ENCODE measurements at regions of chr16 and their contacts with region 1.

Region 1: GRCh38 chr16:48452977-48453760 is 68.0 kb upstream of the SIAH1 start:
- DNase-seq: no peak
- H3K4me3 Mint-ChIP-seq: no peak overlapping the region
- H3K27ac Mint-ChIP-seq: no peak overlapping the region
- H3K4me1 Mint-ChIP-seq: peaks cover 5% of the 10 kb centered on the region
- H3K27me3 Mint-ChIP-seq: peaks cover 14% of the 10 kb centered on the region

Region 2: DNA sequence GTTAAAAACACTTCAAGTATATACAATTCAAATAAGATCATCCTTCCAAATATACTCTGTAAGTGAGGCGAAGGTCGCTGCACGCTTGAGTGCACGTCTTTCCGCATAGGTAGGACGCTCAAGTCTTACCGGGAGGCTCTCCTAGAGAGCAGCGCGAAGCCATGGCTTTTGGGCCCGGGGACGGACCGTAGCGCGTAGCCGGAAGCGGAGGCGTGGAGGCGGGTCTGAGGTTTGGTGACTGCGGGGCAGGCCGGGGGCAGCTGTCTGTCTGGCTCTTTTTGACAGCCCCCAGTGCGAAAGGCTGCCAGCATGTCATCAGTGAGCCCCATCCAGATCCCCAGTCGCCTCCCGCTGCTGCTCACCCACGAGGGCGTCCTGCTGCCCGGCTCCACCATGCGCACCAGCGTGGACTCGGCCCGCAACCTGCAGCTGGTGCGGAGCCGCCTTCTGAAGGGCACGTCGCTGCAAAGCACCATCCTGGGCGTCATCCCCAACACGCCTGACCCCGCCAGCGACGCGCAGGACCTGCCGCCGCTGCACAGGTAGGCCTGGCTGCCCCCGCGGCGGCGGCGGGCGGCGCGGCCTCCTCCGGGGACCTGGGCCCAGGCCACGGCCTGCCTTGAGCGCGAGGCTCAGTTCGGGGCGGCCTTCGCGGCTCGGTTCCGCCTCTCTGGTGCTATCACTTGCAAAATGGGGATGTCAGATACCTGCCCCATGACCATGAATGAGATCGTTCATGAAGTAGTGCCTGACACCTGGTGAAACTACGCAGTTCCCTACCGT is 208.9 kb before region 1 on chr16 and contains the start of gene LONP2:
- intact Hi-C with region 1: loop called (anchors 1 kb)
- DNase-seq: peak; percentile 90
- H3K4me3 Mint-ChIP-seq: peak within 1 kb of the TSS; percentile 92
- H3K27ac Mint-ChIP-seq: peak within 1 kb of the TSS; percentile 93
- H3K4me1 Mint-ChIP-seq: peaks cover 27% of the 10 kb centered on the region
- H3K27me3 Mint-ChIP-seq: peaks cover 2% of the 10 kb centered on the region
- total RNA-seq, gene LONP2: 52.2 and 55.7 TPM in 2 replicates

Region 3: DNA sequence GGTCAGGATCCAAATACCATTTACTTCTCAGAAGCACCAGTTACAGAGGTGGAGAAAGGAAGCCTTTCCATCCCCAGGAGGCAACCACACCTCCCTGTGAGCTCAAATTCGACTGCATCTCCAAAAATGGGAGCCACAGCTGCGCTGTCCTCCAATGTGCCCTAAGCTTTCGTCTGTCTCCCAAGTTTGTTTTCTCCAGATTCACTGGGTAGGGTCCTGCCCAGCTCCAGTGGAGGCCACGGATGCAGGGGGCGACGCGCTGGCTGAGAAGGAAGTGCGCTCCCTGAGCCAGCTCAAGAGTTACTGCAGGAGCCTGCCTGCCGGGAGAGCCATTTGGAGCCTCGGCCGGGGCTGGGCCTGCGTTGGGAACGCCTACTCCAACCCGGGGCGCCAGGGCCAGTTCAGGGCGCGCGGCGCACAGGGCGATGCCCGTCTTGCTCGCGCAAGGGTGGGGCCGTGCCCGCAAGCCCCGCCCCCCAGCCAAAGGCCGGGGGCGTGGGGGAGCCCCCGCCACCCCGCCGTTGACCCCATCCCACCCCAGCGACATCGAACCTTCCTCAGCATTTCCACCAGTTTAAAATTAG is 87.5 kb before region 1 on chr16:
- intact Hi-C with region 1: loop called (anchors 1 kb)
- DNase-seq: peak; percentile 80
- H3K4me3 Mint-ChIP-seq: peak overlapping the region; percentile 90
- H3K27ac Mint-ChIP-seq: peak overlapping the region; percentile 96
- H3K4me1 Mint-ChIP-seq: peaks cover 59% of the 10 kb centered on the region
- H3K27me3 Mint-ChIP-seq: no peaks in the 10 kb centered on the region

Region 4: GRCh38 chr16:48409839-48410611 is 43.1 kb before region 1 on chr16:
- intact Hi-C with region 1: loop called (anchors 1 kb)
- DNase-seq: no peak
- H3K4me3 Mint-ChIP-seq: no peak overlapping the region
- H3K27ac Mint-ChIP-seq: no peak overlapping the region
- H3K4me1 Mint-ChIP-seq: peaks cover 9% of the 10 kb centered on the region
- H3K27me3 Mint-ChIP-seq: peaks cover 11% of the 10 kb centered on the region

Region 5: GRCh38 chr16:48632137-48632774 is 179.1 kb after region 1 on chr16:
- intact Hi-C with region 1: loop called (anchors 1 kb)
- DNase-seq: no peak
- H3K4me3 Mint-ChIP-seq: no peak overlapping the region
- H3K27ac Mint-ChIP-seq: no peak overlapping the region
- H3K4me1 Mint-ChIP-seq: peaks cover 11% of the 10 kb centered on the region
- H3K27me3 Mint-ChIP-seq: peaks cover 11% of the 10 kb centered on the region

Measured in activated T-helper 1 cell treated with anti-CD3 and anti-CD28 coated beads, Interleukin-12 subunit alpha, Interleukin-12 subunit beta, Interleukin-2, Interleukin-4 antibody, amounts not matched to agents 30 ng/mL and 10 ng/mL and 1 ng/mL, durations not matched to agents 14 hours and 24 hours and 36 hours (primary cell).